MCF 10A (cell line): ENCODE measurements at regions of chr10 and their contacts with region 1.

Region 1: GRCh38 chr10:119750391-119751230 is 24.8 kb downstream of the INPP5F start:
- DNase-seq: peak; percentile 84
- H3K4me3 Mint-ChIP-seq: no peak overlapping the region
- H3K27ac Mint-ChIP-seq: no peak overlapping the region
- H3K4me1 Mint-ChIP-seq: peaks cover 11% of the 10 kb centered on the region
- H3K27me3 Mint-ChIP-seq: no peaks in the 10 kb centered on the region
- CTCF ChIP-seq: peak; percentile 91

Region 2: GRCh38 chr10:119178372-119179119 is 572.1 kb before region 1 on chr10 and contains the start of gene PRDX3:
- CTCF ChIA-PET with region 1: no interaction called
- POLR2A ChIA-PET with region 1: no interaction called
- intact Hi-C with region 1: no loop called
- DNase-seq: peak; percentile 88
- H3K4me3 Mint-ChIP-seq: peak within 1 kb of the TSS; percentile 85
- H3K27ac Mint-ChIP-seq: peak within 1 kb of the TSS; percentile 89
- H3K4me1 Mint-ChIP-seq: peaks cover 11% of the 10 kb centered on the region
- H3K27me3 Mint-ChIP-seq: no peaks in the 10 kb centered on the region
- CTCF ChIP-seq: peak; percentile 10
- total RNA-seq, gene PRDX3: 85.6 and 94.4 TPM in 2 replicates

Region 3: GRCh38 chr10:119263951-119264621 is 486.5 kb before region 1 on chr10:
- CTCF ChIA-PET with region 1: no interaction called
- POLR2A ChIA-PET with region 1: no interaction called
- intact Hi-C with region 1: no loop called
- DNase-seq: no peak
- H3K4me3 Mint-ChIP-seq: no peak overlapping the region
- H3K27ac Mint-ChIP-seq: no peak overlapping the region
- H3K4me1 Mint-ChIP-seq: peaks cover 6% of the 10 kb centered on the region
- H3K27me3 Mint-ChIP-seq: no peaks in the 10 kb centered on the region
- CTCF ChIP-seq: no peak

Region 4: GRCh38 chr10:119502209-119502608 is 248.4 kb before region 1 on chr10:
- CTCF ChIA-PET with region 1: no interaction called
- POLR2A ChIA-PET with region 1: no interaction called
- intact Hi-C with region 1: no loop called
- DNase-seq: no peak
- H3K4me3 Mint-ChIP-seq: no peak overlapping the region
- H3K27ac Mint-ChIP-seq: no peak overlapping the region
- H3K4me1 Mint-ChIP-seq: no peaks in the 10 kb centered on the region
- H3K27me3 Mint-ChIP-seq: no peaks in the 10 kb centered on the region
- CTCF ChIP-seq: no peak

Region 5: GRCh38 chr10:119686439-119687191 is 64.0 kb before region 1 on chr10:
- CTCF ChIA-PET with region 1: interaction called, 24 read pairs
- POLR2A ChIA-PET with region 1: interaction called, 14 read pairs
- intact Hi-C with region 1: loop called (anchors 1 kb)
- DNase-seq: peak; percentile 93
- H3K4me3 Mint-ChIP-seq: peak overlapping the region; percentile 71
- H3K27ac Mint-ChIP-seq: peak overlapping the region; percentile 82
- H3K4me1 Mint-ChIP-seq: peaks cover 20% of the 10 kb centered on the region
- H3K27me3 Mint-ChIP-seq: no peaks in the 10 kb centered on the region
- CTCF ChIP-seq: peak; percentile 95

Region 6: GRCh38 chr10:119761106-119761505 is 10.5 kb after region 1 on chr10:
- CTCF ChIA-PET with region 1: interaction called, 47 read pairs
- POLR2A ChIA-PET with region 1: interaction called, 7 read pairs
- intact Hi-C with region 1: no loop called
- DNase-seq: peak; percentile 64
- H3K4me3 Mint-ChIP-seq: no peak overlapping the region
- H3K27ac Mint-ChIP-seq: no peak overlapping the region
- H3K4me1 Mint-ChIP-seq: peaks cover 13% of the 10 kb centered on the region
- H3K27me3 Mint-ChIP-seq: no peaks in the 10 kb centered on the region
- CTCF ChIP-seq: no peak

Region 7: GRCh38 chr10:119807960-119808697 is 57.5 kb after region 1 on chr10:
- CTCF ChIA-PET with region 1: interaction called, 23 read pairs
- POLR2A ChIA-PET with region 1: no interaction called
- intact Hi-C with region 1: no loop called
- DNase-seq: peak; percentile 3
- H3K4me3 Mint-ChIP-seq: no peak overlapping the region
- H3K27ac Mint-ChIP-seq: no peak overlapping the region
- H3K4me1 Mint-ChIP-seq: no peaks in the 10 kb centered on the region
- H3K27me3 Mint-ChIP-seq: no peaks in the 10 kb centered on the region
- CTCF ChIP-seq: no peak

Region 8: DNA sequence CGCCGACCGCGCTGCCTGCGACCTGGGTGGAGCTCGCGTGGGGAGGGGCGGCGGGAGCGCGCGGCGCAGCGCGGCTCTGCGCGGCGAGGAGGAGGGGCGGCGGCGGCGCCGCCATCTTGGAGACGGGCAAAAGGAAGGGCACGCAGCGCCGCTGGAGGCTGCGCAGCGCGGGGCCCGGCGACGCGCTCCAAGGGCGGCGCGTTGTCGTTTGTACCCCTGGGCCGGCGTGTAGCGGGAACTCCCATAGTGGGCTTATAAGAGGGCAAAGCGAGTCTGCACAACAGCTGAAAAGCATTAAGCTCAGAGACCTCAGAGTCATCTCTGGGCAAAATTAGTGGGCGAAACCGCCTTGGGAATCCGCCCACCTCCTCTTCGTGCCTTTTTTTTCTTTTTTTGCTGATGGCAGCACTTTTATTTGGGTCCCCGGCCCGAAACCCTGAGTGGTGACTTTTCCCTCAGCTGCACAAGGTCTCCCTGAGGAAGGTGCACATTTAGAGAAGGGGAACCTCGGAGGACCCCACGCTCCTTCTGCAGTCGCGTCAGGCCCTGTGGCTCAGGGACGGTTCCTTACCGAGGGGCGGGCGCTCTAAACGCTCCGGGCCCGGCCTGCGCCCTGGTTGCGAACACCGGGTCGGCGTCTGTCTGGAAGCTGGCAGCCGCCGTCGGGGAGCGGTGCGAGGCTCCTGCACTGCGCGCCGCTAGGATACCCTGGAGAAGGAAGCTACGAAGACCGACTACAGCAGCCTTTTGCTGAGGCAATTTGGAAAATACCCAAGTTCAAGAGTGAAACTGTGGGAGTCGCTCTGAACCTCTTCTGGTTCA is 122.5 kb after region 1 on chr10:
- CTCF ChIA-PET with region 1: interaction called, 6 read pairs
- POLR2A ChIA-PET with region 1: interaction called, 10 read pairs
- intact Hi-C with region 1: no loop called
- DNase-seq: peak; percentile 77
- H3K4me3 Mint-ChIP-seq: peak overlapping the region; percentile 87
- H3K27ac Mint-ChIP-seq: peak overlapping the region; percentile 59
- H3K4me1 Mint-ChIP-seq: peaks cover 28% of the 10 kb centered on the region
- H3K27me3 Mint-ChIP-seq: no peaks in the 10 kb centered on the region
- CTCF ChIP-seq: no peak

Region 9: GRCh38 chr10:121437596-121437995 is 1687.0 kb after region 1 on chr10:
- CTCF ChIA-PET with region 1: no interaction called
- POLR2A ChIA-PET with region 1: no interaction called
- intact Hi-C with region 1: no loop called
- DNase-seq: no peak
- H3K4me3 Mint-ChIP-seq: no peak overlapping the region
- H3K27ac Mint-ChIP-seq: no peak overlapping the region
- H3K4me1 Mint-ChIP-seq: no peaks in the 10 kb centered on the region
- H3K27me3 Mint-ChIP-seq: no peaks in the 10 kb centered on the region
- CTCF ChIP-seq: no peak